ENCODE measurements at regions of chr2 and their contacts with region 1.

Region 1: GRCh38 chr2:175282290-175282689 is 100.8 kb upstream of the ATP5MC3 start:
- DNase-seq: no peak
- ATAC-seq: peak in 3 of 4 donors; percentile 47 to 59 (median 48)
- H3K4me3 ChIP-seq: no peak overlapping the region
- H3K27ac ChIP-seq: no peak overlapping the region
- H3K4me1 ChIP-seq: no peaks in the 10 kb centered on the region
- H3K27me3 ChIP-seq: peaks cover 0 to 5% (median 0%) of the 10 kb centered on the region in 9 donors
- CTCF ChIP-seq: peak; percentile 20 to 62 (median 44)
- POLR2A ChIP-seq: no peak

Region 2: GRCh38 chr2:175030380-175031271 is 251.7 kb before region 1 on chr2:
- intact Hi-C with region 1: loop called in 7 of 10 experiments (anchors 10 kb)
- DNase-seq: peak in 2 of 5 donors; percentile 32 to 34
- ATAC-seq: peak in 3 of 4 donors; percentile 45 to 72 (median 57)
- H3K4me3 ChIP-seq: no peak overlapping the region
- H3K27ac ChIP-seq: no peak overlapping the region
- H3K4me1 ChIP-seq: peaks cover 0 to 3% (median 0%) of the 10 kb centered on the region in 12 donors
- H3K27me3 ChIP-seq: no peaks in the 10 kb centered on the region
- CTCF ChIP-seq: peak in 8 of 12 donors; percentile 10 to 46 (median 30)
- POLR2A ChIP-seq: no peak

Region 3: DNA sequence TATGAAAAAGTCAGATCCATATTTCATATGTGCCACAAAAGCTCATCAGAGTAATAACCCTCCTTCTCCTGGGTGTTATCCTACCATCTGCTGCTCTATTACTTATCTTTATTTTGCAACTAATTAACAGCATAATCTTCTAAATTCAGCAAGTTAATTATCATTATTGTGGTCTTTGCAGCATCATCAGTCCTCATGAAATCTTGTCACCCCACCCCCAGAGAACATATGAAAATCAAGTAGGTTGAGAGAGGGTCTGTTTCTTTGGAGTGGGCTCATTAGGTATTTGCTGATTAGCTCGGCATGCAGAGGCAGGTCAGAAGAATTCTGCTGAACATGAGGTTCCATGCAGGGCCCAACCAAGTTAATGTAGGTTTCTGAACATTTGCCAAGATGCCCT is 179.1 kb before region 1 on chr2:
- intact Hi-C with region 1: loop called in 1 of 10 experiments (anchors 10 kb)
- DNase-seq: no peak
- ATAC-seq: no peak
- H3K4me3 ChIP-seq: no peak overlapping the region
- H3K27ac ChIP-seq: no peak overlapping the region
- H3K4me1 ChIP-seq: peaks cover 0 to 7% (median 0%) of the 10 kb centered on the region in 12 donors
- H3K27me3 ChIP-seq: no peaks in the 10 kb centered on the region
- CTCF ChIP-seq: no peak
- POLR2A ChIP-seq: no peak

Region 4: DNA sequence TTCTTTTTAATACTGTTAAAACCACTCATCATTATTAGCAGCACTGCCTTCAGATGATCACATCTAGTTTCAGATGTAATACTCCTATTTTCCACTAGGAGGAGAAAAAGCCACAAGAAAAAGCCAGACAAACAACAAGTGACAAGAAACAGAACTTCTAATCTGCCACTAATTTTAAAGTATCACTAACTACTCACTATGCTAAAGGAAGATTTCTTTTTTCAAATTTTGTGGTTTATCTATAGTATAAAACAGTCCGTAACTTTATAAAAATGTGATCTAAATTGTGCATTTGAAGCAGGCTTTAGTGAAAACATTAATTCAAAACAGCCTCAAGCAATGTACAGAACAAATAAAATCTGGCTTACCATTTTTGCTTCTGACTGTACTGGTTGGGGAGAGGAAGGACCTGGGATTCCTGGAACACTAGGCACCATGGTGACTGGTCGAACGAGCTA is 171.1 kb before region 1 on chr2:
- intact Hi-C with region 1: loop called in 9 of 10 experiments (anchors 1 to 10 kb)
- DNase-seq: no peak
- ATAC-seq: peak in 1 of 4 donors; percentile 53
- H3K4me3 ChIP-seq: no peak overlapping the region
- H3K27ac ChIP-seq: no peak overlapping the region
- H3K4me1 ChIP-seq: no peaks in the 10 kb centered on the region
- H3K27me3 ChIP-seq: no peaks in the 10 kb centered on the region
- CTCF ChIP-seq: peak; percentile 72 to 87 (median 78)
- POLR2A ChIP-seq: no peak

Region 5: DNA sequence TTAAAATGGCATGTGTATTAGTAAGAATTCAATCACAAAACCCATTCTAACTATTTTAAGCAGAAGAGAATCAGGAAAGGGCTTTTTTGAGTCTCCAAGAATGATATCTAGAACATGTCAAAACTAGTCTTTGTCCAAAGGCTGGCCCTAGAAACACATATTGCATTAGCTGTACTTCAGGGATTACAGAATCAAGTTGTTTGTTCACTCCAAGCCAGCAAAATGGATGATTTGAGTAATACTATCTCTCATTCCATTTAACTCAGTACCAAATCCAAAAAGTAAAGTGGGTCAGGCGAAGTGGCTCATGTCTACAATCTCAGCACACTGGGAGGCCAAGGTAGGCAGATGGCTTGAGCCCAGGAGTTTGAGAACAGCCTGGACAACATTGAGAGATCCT is 155.6 kb before region 1 on chr2:
- intact Hi-C with region 1: no loop called
- DNase-seq: no peak
- ATAC-seq: no peak
- H3K4me3 ChIP-seq: no peak overlapping the region
- H3K27ac ChIP-seq: no peak overlapping the region
- H3K4me1 ChIP-seq: peaks cover 0 to 11% (median 1%) of the 10 kb centered on the region in 12 donors
- H3K27me3 ChIP-seq: no peaks in the 10 kb centered on the region
- CTCF ChIP-seq: no peak
- POLR2A ChIP-seq: no peak

Region 6: GRCh38 chr2:175203621-175204496 is 78.4 kb before region 1 on chr2:
- intact Hi-C with region 1: loop called in 7 of 10 experiments (anchors 5 to 10 kb)
- DNase-seq: peak in 3 of 5 donors; percentile 20 to 40 (median 39)
- ATAC-seq: peak; percentile 43 to 80 (median 74)
- H3K4me3 ChIP-seq: no peak overlapping the region
- H3K27ac ChIP-seq: no peak overlapping the region
- H3K4me1 ChIP-seq: peaks cover 0 to 11% (median 0%) of the 10 kb centered on the region in 12 donors
- H3K27me3 ChIP-seq: peaks cover 0 to 20% (median 0%) of the 10 kb centered on the region in 9 donors
- CTCF ChIP-seq: peak; percentile 23 to 53 (median 38)
- POLR2A ChIP-seq: no peak

Measured in heart left ventricle (tissue), 16 donors.